ENCODE measurements at regions of chr9 and their contacts with region 1.

Region 1: GRCh38 chr9:121121582-121122087 is 46.9 kb downstream of the CNTRL start:
- DNase-seq: peak; percentile 83 to 98 (median 97)
- ATAC-seq: peak; percentile 100
- H3K4me3 ChIP-seq: peak overlapping the region; percentile 87
- H3K4me3 Mint-ChIP-seq: peak overlapping the region; percentile 87 to 96 (median 89)
- H3K27ac ChIP-seq: peak overlapping the region; percentile 88
- H3K27ac Mint-ChIP-seq: peak overlapping the region; percentile 87 to 99 (median 93)
- H3K4me1 ChIP-seq: peaks cover 20 to 26% of the 10 kb centered on the region in 2 donors
- H3K4me1 Mint-ChIP-seq: peaks cover 27 to 63% (median 54%) of the 10 kb centered on the region in 7 donors
- H3K27me3 ChIP-seq: no peaks in the 10 kb centered on the region
- H3K27me3 Mint-ChIP-seq: no peaks in the 10 kb centered on the region

Region 2: GRCh38 chr9:120668399-120668798 is 453.2 kb before region 1 on chr9:
- CTCF ChIA-PET with region 1: no interaction called
- POLR2A ChIA-PET with region 1: no interaction called
- intact Hi-C with region 1: no loop called
- DNase-seq: no peak
- ATAC-seq: no peak
- H3K4me3 ChIP-seq: no peak overlapping the region
- H3K4me3 Mint-ChIP-seq: no peak overlapping the region
- H3K27ac ChIP-seq: no peak overlapping the region
- H3K27ac Mint-ChIP-seq: no peak overlapping the region
- H3K4me1 ChIP-seq: no peaks in the 10 kb centered on the region
- H3K4me1 Mint-ChIP-seq: peaks cover 0 to 37% (median 26%) of the 10 kb centered on the region in 7 donors
- H3K27me3 ChIP-seq: no peaks in the 10 kb centered on the region
- H3K27me3 Mint-ChIP-seq: no peaks in the 10 kb centered on the region

Region 3: DNA sequence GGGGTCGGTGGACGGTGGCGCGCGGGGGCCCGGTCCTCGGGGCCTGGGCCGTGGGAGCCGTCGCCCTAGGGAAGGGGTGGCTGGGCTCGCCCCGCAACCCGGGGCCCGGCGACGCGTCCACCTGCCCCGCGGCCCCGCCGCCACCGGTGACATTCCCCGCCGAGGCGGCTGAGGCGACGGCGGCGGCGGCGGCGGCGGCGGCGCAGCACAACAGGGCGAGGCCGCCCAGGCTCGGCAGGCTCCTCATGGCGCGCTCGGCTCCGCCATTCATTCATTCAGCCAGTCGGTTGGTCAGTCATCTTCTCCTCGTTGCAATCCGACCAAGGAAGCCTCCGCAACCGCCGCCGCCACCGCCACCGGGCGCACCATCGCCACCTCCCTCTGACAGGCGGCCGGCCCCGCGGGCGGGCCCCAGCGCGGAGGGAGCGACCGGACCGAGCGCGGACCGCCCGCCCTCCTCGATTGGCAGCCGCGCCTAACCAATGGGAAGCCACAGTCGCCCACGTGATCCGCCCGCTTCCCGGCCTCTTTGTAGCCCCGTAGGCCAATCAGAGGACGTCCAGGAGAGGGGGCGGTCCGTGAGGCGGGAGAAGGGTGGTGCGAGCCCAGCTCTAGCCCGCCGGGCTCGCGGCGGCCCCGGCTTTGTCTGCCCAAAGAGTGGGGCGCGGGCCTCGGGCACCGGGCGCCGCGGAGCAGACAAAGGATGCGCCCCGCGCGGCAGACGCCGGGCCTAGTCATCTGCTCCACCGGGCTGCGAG is 407.4 kb before region 1 on chr9 and contains the start of gene MEGF9:
- CTCF ChIA-PET with region 1: no interaction called
- POLR2A ChIA-PET with region 1: no interaction called
- intact Hi-C with region 1: loop called (anchors 1 to 2 kb)
- DNase-seq: peak; percentile 90 to 97 (median 94)
- ATAC-seq: peak; percentile 98
- H3K4me3 ChIP-seq: peak within 1 kb of the TSS; percentile 85
- H3K4me3 Mint-ChIP-seq: peak within 1 kb of the TSS; percentile 82 to 98 (median 87)
- H3K27ac ChIP-seq: peak within 1 kb of the TSS; percentile 79
- H3K27ac Mint-ChIP-seq: peak within 1 kb of the TSS; percentile 31 to 98 (median 87)
- H3K4me1 ChIP-seq: peaks cover 22% of the 10 kb centered on the region in 2 donors
- H3K4me1 Mint-ChIP-seq: peaks cover 18 to 43% (median 36%) of the 10 kb centered on the region in 7 donors
- H3K27me3 ChIP-seq: no peaks in the 10 kb centered on the region
- H3K27me3 Mint-ChIP-seq: no peaks in the 10 kb centered on the region
- total RNA-seq, gene MEGF9: 9.5 to 35.4 (median 11.1) TPM

Region 4: DNA sequence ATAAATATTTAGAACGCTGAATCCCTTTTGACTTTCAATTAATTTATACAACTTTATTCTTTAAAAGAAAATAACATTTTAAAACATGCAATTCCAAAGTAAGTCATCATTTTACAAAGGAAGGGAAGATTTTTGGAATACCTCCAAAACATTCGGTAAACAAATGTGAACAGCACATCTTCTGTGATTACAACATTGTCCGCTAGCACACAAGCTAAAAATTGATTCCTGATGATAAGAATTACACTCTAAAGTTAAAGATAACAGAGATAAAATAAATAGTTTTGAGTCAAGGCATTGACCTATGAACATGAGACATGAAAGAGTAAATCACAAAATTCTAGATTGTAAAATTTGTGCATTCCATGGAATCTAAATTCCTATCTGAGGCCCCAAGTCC is 138.8 kb before region 1 on chr9:
- CTCF ChIA-PET with region 1: interaction called, 3 read pairs
- POLR2A ChIA-PET with region 1: no interaction called
- intact Hi-C with region 1: loop called in 1 of 2 experiments (anchors 2 kb)
- DNase-seq: no peak
- ATAC-seq: no peak
- H3K4me3 ChIP-seq: no peak overlapping the region
- H3K4me3 Mint-ChIP-seq: no peak overlapping the region
- H3K27ac ChIP-seq: no peak overlapping the region
- H3K27ac Mint-ChIP-seq: no peak overlapping the region
- H3K4me1 ChIP-seq: no peaks in the 10 kb centered on the region
- H3K4me1 Mint-ChIP-seq: peaks cover 0 to 10% (median 4%) of the 10 kb centered on the region in 7 donors
- H3K27me3 ChIP-seq: no peaks in the 10 kb centered on the region
- H3K27me3 Mint-ChIP-seq: peaks cover 0 to 30% (median 0%) of the 10 kb centered on the region in 5 donors

Region 5: GRCh38 chr9:121133149-121133816 is 11.6 kb after region 1 on chr9:
- CTCF ChIA-PET with region 1: interaction called, 29 read pairs
- POLR2A ChIA-PET with region 1: interaction called, 181 read pairs
- intact Hi-C with region 1: loop called (anchors 1 kb)
- DNase-seq: peak; percentile 39 to 88 (median 79)
- ATAC-seq: peak; percentile 99
- H3K4me3 ChIP-seq: peak overlapping the region; percentile 51
- H3K4me3 Mint-ChIP-seq: peak overlapping the region; percentile 21 to 82 (median 74)
- H3K27ac ChIP-seq: peak overlapping the region; percentile 46
- H3K27ac Mint-ChIP-seq: peak overlapping the region; percentile 76 to 99 (median 90)
- H3K4me1 ChIP-seq: peaks cover 23 to 40% of the 10 kb centered on the region in 2 donors
- H3K4me1 Mint-ChIP-seq: peaks cover 48 to 90% (median 82%) of the 10 kb centered on the region in 7 donors
- H3K27me3 ChIP-seq: no peaks in the 10 kb centered on the region
- H3K27me3 Mint-ChIP-seq: no peaks in the 10 kb centered on the region

Region 6: GRCh38 chr9:121169094-121169601 is 47.5 kb after region 1 on chr9:
- CTCF ChIA-PET with region 1: interaction called, 4 read pairs
- POLR2A ChIA-PET with region 1: interaction called, 10 read pairs
- intact Hi-C with region 1: loop called (anchors 1 to 2 kb)
- DNase-seq: peak in 7 of 9 donors; percentile 20 to 46 (median 41)
- ATAC-seq: peak; percentile 85
- H3K4me3 ChIP-seq: no peak overlapping the region
- H3K4me3 Mint-ChIP-seq: peak overlapping the region in 7 of 10 donors; percentile 21 to 70 (median 53)
- H3K27ac ChIP-seq: peak overlapping the region; percentile 67
- H3K27ac Mint-ChIP-seq: peak overlapping the region; percentile 38 to 94 (median 84)
- H3K4me1 ChIP-seq: peaks cover 0 to 23% of the 10 kb centered on the region in 2 donors
- H3K4me1 Mint-ChIP-seq: peaks cover 10 to 29% (median 25%) of the 10 kb centered on the region in 7 donors
- H3K27me3 ChIP-seq: no peaks in the 10 kb centered on the region
- H3K27me3 Mint-ChIP-seq: no peaks in the 10 kb centered on the region

Region 7: GRCh38 chr9:121286973-121287741 is 165.5 kb after region 1 on chr9:
- CTCF ChIA-PET with region 1: no interaction called
- POLR2A ChIA-PET with region 1: no interaction called
- intact Hi-C with region 1: no loop called
- DNase-seq: peak in 1 of 9 donors; percentile 55
- ATAC-seq: peak; percentile 65
- H3K4me3 ChIP-seq: no peak overlapping the region
- H3K4me3 Mint-ChIP-seq: no peak overlapping the region
- H3K27ac ChIP-seq: no peak overlapping the region
- H3K27ac Mint-ChIP-seq: no peak overlapping the region
- H3K4me1 ChIP-seq: no peaks in the 10 kb centered on the region
- H3K4me1 Mint-ChIP-seq: peaks cover 0 to 20% (median 9%) of the 10 kb centered on the region in 7 donors
- H3K27me3 ChIP-seq: no peaks in the 10 kb centered on the region
- H3K27me3 Mint-ChIP-seq: no peaks in the 10 kb centered on the region

Measured in naive thymus-derived CD4-positive, alpha-beta T cell (primary cell).